Left colon (tissue), 2 donors: ENCODE measurements at regions of chr5 and their contacts with region 1.

Region 1: DNA sequence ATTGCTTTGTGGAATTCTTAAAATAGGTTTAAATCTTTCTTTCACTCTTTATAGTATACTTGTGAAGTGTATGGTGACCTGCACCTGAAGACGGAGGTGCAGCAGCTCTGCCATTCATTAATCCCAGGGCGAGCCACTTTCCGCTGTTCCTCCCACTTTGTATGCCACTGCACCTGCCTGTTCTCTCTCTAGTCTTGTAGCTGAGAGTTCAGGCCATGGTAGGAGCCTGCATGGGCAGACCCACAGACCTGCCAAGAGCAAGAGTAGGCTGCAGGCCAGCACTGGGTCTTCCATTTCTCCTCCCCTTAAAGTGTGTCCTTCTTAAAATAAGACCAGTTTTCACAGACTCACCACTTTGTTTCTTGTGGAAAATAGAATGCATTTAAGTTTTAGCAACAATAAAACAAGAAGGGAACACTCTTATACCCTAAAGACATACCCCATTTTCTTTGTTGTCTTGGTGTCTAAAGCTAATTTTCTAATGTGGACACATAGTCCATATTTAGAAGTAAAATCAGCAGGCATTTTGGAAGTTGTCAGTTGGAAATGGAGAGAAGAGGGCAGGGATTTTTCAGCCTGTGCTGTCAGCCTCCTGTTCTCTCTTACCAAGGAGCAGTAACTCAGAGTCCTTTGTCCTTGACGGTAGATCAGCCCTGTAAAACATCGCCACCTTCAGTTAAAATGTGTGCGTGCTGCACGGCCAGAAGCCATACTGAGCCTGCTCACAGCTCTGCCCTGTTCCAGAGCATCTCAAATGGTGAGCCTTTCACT is 103.2 kb downstream of the SNCAIP start:
- DNase-seq: peak; percentile 37 to 52
- ATAC-seq: peak; percentile 97

Region 2: DNA sequence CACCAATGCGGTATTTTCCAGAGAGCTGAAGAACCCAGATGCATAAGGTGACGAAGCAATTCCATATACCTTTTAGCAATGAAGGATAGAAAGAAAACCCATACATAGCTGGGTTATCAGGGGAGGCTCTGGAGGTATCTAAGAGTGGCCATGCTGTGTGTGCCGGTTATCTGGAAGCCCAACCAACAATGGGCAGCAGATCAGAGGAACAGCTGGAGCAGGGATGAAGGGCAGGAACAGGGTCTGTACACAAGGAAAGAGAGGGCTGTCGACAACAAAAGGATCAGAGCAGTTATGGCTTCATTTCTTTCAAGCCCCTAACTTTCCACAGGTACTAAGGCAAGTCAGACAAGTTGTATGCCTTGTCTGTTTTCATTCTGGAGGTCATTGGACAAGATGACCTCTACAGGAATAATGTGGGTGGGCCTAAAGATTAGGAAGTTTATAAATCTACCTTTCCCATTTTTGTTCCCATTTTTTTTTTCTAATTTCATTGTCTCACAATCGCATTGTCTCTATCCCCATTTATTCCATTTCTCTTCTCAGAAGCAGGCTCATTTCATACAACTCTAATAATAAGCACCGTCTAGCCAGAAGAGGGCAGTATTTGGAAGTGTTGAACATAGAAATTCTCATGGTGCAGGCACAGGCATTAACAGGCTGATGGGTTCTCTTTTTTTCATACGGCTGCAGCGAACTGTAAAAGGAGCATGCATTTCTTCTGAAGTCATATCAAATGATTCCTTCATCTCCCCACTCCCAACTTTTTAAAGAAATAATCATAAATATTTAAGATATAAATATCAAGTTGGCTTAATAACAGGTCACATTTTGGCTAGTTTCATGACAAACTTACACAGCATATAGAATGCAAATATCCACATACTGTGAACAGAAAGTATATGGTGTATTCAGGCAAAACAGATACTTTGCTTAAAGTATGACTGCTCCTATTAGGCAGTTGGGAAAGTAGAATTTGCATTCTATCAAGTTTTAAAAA is 222.4 kb before region 1 on chr5:
- intact Hi-C with region 1: loop called (anchors 2 to 10 kb)
- DNase-seq: no peak
- ATAC-seq: peak; percentile 84

Region 3: DNA sequence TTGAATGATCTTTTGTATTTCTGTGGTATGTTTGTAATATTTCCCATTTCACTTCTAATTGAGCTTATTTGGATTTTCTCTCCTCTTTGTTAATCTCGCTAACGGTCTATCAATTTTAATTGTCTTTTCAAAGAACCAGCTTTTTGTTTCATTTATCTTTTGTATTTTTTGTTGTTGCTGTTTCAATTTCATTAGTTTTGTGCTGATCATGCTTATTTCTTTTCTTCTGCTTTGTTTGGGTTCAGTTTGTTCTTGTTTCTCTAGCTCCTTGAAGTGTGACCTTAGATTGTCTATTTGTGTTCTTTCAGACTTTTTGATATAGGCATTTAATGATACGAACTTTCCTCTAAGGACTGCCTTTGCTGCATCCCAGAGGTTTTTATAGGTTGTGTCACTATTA is 131.6 kb before region 1 on chr5:
- intact Hi-C with region 1: no loop called
- DNase-seq: no peak
- ATAC-seq: no peak

Region 4: DNA sequence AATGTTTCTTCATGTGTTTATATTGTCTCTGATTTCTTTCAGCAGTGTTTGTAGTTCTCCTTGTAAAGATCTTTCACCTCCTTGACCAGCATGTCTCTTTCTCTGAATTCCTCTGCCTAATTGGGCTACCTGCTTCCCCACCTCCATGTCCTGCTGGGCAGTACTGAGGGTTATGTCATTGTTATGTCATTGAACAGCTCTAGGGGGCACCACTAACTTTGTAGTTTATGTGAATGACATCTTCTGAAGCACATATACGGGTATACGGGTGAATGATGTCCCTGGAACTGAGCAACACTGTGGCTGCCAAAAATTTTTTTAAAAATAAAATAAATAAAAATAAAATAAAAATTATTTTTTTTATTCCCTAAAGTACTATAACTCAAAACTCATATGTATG is 120.1 kb before region 1 on chr5:
- intact Hi-C with region 1: loop called in 1 of 2 experiments (anchors 10 kb)
- DNase-seq: no peak
- ATAC-seq: peak; percentile 73